ENCODE measurements at regions of chr3 and their contacts with region 1.

Region 1: DNA sequence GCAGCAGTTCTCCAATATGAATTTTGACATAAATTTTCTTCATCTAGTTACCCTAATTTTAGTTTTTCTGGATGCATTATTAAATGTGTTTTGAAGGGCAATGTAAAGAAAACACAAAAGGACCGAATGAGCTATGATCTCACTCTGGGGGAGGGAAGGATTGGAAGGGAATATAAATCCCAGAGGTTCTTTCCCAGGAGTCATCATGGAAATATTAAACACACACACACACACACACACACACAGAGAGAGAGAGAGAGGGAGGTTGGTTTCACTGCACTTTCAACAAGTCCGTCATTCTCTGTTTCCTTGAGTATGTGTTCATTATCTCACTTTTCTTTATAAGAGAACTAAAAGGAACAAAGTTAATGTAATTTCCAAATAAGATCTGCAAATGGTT is 70.7 kb upstream of the DCBLD2 start:
- DNase-seq: peak; percentile 93
- H3K4me3 ChIP-seq: no peak overlapping the region
- CTCF ChIP-seq: no peak

Region 2: DNA sequence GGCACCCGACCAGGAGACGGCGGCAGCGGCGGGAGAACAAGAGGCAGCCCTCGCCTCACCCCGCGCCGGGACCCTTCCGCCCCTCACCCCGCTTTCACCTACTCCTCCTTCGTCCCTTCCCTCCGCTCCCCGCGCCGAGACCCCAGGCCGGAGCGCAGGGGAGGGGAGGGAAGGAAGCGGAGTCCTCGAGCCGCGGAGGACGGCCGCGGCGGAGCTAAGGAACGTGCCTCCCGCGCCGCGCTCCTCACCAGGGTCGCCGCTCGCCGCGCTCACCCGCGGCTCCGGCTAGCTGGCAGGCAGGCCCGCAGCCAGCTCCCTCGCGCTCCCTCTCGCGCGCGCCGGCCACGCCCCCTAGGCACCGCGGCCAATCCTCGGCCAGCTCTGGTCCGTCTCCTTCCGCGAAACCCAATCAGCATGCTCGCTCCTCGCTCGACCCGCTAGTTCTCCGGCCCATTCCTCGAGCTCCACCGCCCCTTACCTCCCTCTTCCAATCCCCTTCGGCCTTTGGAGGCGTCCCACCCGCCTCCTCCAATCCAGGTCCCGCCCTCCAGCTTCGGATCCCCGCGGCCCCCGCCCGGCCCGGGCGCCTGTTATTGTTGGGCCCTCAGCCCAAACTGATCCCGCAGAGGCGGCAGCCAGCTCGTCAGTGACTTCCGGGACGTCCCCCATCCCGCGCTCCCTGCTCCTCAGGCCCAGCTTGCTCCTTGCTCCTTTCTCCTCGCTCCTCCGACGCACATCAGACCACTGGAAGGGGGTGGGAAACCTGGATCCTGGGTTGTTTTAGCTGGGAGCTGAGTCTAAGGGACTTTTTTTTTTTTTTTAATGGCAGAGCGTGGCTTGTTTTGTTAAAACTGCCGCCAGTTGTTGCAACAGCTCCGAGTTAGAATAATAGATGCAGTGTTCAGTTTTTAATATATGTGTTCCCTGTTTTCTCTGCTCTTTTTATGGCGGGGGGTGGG is 70.5 kb before region 1 on chr3 and contains the start of gene DCBLD2:
- CTCF ChIA-PET with region 1: interaction called, 4 read pairs
- POLR2A ChIA-PET with region 1: interaction called, 13 read pairs
- DNase-seq: peak; percentile 96
- H3K4me3 ChIP-seq: peak within 1 kb of the TSS; percentile 86
- CTCF ChIP-seq: no peak